A673 (cell line): ENCODE measurements at regions of chr17 and their contacts with region 1.

Region 1: DNA sequence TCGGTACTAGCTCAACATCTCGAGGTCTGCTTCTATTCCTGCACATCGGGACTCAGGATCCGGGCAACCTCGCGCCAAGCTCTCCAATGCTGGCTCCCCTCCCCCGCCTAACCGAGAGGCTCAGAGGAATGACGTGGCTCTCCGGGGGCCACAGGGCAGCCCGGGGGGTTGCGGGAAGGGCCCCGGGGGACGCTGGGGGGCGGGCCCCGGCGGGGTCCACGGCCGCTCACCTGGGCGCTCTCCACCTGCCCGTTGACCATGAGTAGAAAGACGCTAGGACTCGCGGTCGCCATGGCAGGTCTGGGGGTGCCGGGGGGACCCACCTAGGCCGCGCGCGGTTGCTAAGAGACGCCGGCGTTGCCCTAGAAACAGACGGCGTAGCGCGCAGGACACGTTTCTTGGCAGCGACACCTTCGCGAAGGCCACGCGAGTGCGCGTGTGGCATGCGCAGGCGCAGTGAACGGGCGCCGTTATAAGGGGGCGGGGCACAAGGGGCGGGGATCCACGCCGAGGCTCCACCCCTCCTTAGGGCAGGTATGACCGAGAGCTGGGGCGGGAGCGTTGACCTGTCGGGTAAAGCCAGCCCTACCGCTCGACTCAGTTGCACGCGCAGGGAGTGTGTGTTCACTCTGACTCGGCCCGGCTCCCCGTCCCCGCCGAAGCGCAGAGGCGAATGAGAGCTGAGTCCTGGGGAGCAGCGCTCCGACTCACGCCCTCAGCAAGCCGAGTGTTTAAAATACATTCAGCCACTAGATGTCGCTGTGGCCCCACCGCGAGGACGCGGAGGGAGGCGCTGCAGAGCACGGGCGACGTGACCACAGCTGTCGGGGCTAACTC is at the start of gene B9D1:
- DNase-seq: peak; percentile 95
- H3K4me3 ChIP-seq: peak within 1 kb of the TSS; percentile 85
- H3K27ac ChIP-seq: peak within 1 kb of the TSS; percentile 88
- H3K4me1 ChIP-seq: peaks cover 22% of the 10 kb centered on the region
- H3K27me3 ChIP-seq: no peaks in the 10 kb centered on the region
- CTCF ChIP-seq: peak; percentile 97
- total RNA-seq, gene B9D1: 37.0 and 45.2 TPM in 2 replicates

Region 2: GRCh38 chr17:19346351-19347255 is 15.9 kb before region 1 on chr17:
- CTCF ChIA-PET with region 1: no interaction called
- POLR2A ChIA-PET with region 1: no interaction called
- intact Hi-C with region 1: no loop called
- DNase-seq: peak; percentile 88
- H3K4me3 ChIP-seq: no peak overlapping the region
- H3K27ac ChIP-seq: peak overlapping the region; percentile 44
- H3K4me1 ChIP-seq: peaks cover 14% of the 10 kb centered on the region
- H3K27me3 ChIP-seq: no peaks in the 10 kb centered on the region
- CTCF ChIP-seq: no peak

Region 3: DNA sequence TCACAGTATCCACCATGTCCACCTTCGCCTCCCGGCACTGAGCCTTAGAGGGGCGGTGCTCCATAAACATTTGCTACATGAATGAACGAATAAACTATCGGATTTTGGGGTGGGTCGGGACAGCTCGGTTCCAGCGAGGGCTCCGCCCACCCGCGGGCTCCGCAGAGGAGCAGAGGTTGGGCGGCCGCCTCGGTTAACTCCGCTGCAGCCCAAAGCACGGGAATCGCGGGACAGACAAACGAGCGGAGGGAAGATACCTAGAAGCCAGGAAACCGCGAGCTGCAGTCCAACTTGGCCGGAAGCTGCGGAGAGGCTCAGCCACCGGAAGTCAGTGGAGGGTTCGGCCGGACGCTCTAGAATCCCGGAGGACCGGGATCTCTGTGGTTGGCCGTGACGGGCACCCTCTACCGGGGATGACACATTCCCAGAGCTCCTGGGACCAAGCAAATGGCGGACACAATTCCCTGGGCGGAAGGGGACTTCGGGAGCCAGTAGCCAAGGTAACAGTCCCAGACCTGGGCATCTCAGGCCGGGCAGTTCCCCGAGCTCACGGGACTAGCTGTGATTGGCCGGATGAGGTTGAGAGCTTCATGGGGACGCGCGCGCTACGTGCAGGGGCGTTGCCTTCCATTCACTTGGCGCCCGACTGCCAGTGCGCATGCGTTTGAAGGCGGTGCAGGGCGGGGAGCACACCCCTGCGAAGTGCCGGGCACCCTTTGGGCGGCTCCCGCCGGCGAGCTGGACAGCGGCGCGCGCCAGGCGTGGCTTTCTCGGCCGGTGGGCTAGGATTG is 15.3 kb after region 1 on chr17:
- CTCF ChIA-PET with region 1: interaction called, 18 read pairs
- POLR2A ChIA-PET with region 1: no interaction called
- intact Hi-C with region 1: no loop called
- DNase-seq: peak; percentile 99
- H3K4me3 ChIP-seq: peak overlapping the region; percentile 68
- H3K27ac ChIP-seq: peak overlapping the region; percentile 94
- H3K4me1 ChIP-seq: peaks cover 4% of the 10 kb centered on the region
- H3K27me3 ChIP-seq: no peaks in the 10 kb centered on the region
- CTCF ChIP-seq: no peak

Region 4: DNA sequence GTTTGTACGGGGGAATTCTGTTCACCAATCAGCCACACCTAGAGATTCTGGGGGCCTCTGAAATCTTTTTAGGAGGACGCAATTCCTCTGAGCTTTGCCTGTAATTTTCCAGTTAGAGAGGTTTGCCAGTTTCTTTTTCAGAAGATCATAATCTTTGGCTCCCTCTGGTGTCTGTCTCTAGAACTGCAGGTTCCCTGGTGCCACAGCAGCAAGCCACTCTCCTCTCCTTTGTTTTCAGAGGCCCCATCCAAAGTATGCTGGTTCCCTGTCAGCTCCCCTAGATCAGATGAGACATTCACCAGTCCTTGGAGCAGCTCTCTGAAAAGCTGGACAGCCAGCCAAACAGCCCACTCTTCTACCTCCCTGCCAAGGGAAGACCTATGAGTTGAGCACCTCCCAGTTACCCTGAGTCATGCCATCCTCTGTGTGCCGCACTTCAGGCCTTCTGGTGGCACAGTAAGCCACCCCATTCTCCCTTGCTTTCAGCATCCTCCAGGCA is 84.6 kb after region 1 on chr17:
- CTCF ChIA-PET with region 1: interaction called, 41 read pairs
- POLR2A ChIA-PET with region 1: no interaction called
- intact Hi-C with region 1: loop called (anchors 1 kb)
- DNase-seq: peak; percentile 88
- H3K4me3 ChIP-seq: no peak overlapping the region
- H3K27ac ChIP-seq: peak overlapping the region; percentile 82
- H3K4me1 ChIP-seq: peaks cover 32% of the 10 kb centered on the region
- H3K27me3 ChIP-seq: no peaks in the 10 kb centered on the region
- CTCF ChIP-seq: peak; percentile 90

Region 5: GRCh38 chr17:19513897-19514488 is 151.5 kb after region 1 on chr17:
- CTCF ChIA-PET with region 1: no interaction called
- POLR2A ChIA-PET with region 1: no interaction called
- intact Hi-C with region 1: loop called (anchors 2 kb)
- DNase-seq: peak; percentile 79
- H3K4me3 ChIP-seq: no peak overlapping the region
- H3K27ac ChIP-seq: no peak overlapping the region
- H3K4me1 ChIP-seq: no peaks in the 10 kb centered on the region
- H3K27me3 ChIP-seq: no peaks in the 10 kb centered on the region
- CTCF ChIP-seq: peak; percentile 94

Region 6: GRCh38 chr17:19648475-19649406 is 286.2 kb after region 1 on chr17 and contains the start of gene ALDH3A2:
- CTCF ChIA-PET with region 1: interaction called, 4 read pairs
- POLR2A ChIA-PET with region 1: no interaction called
- intact Hi-C with region 1: loop called (anchors 5 kb)
- DNase-seq: peak; percentile 98
- H3K4me3 ChIP-seq: peak within 1 kb of the TSS; percentile 81
- H3K27ac ChIP-seq: peak within 1 kb of the TSS; percentile 79
- H3K4me1 ChIP-seq: peaks cover 31% of the 10 kb centered on the region
- H3K27me3 ChIP-seq: no peaks in the 10 kb centered on the region
- CTCF ChIP-seq: 0 out of 2 replicates have a peak, but pooled peaks have one; percentile 14
- total RNA-seq, gene ALDH3A2: 97.0 and 97.3 TPM in 2 replicates

Region 7: DNA sequence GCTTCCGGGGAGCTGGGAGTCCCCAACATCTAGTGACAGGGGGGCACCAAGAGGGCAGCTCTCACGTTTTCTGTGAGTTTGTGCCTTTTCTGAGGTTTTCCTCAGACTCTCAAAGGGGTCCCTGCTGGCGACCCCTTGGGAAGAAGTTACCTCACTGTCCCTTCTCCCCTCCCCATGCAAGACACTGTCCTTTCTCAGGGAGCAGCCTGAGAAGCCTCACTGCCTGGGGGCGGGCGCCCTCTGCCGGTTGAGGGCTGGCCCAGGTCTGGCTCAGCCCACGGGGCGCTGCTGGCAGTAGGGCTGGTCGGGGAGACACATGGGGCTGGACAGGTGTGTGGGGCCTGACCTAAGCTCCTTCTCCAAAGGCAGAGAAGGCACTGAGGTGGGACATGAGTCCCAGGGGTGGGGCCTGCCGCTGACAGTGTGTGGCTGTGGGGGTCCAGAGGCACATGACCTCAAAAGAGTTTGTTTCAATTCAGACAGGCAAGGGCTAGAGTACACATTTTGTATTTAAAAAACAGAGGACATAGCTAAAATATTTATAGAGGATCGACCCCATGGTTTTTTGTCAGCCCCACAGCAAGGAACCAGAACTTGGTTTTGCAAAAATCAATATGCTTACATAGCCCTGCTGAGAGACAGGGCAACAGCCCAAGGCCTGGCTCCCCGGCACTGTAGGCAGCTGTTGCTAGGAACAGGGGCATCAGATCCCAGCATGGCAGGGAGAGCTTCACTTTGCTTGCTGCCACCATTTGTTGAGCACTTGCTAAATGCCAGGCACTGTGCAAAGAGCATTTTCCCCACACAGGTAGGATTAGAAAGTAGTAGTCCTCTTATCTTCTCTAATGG is 404.2 kb after region 1 on chr17:
- CTCF ChIA-PET with region 1: interaction called, 23 read pairs
- POLR2A ChIA-PET with region 1: no interaction called
- intact Hi-C with region 1: loop called (anchors 1 kb)
- DNase-seq: peak; percentile 75
- H3K4me3 ChIP-seq: no peak overlapping the region
- H3K27ac ChIP-seq: no peak overlapping the region
- H3K4me1 ChIP-seq: no peaks in the 10 kb centered on the region
- H3K27me3 ChIP-seq: no peaks in the 10 kb centered on the region
- CTCF ChIP-seq: peak; percentile 99